ENCODE measurements at regions of chr12 and their contacts with region 1.

Region 1: GRCh38 chr12:108664338-108665258 is 30.9 kb upstream of the SELPLG start:
- DNase-seq: peak; percentile 82
- ATAC-seq: peak; percentile 96
- H3K4me3 Mint-ChIP-seq: no peak overlapping the region
- H3K27ac Mint-ChIP-seq: peak overlapping the region; percentile 55; the same call in 1 of the 2 replicates
- H3K4me1 Mint-ChIP-seq: peaks cover 32% of the 10 kb centered on the region
- H3K27me3 Mint-ChIP-seq: no peaks in the 10 kb centered on the region
- CTCF ChIP-seq: peak; percentile 76

Region 2: GRCh38 chr12:108257004-108257403 is 407.6 kb before region 1 on chr12:
- CTCF ChIA-PET with region 1: no interaction called
- POLR2A ChIA-PET with region 1: no interaction called
- DNase-seq: no peak
- ATAC-seq: no peak
- H3K4me3 Mint-ChIP-seq: no peak overlapping the region
- H3K27ac Mint-ChIP-seq: no peak overlapping the region
- H3K4me1 Mint-ChIP-seq: peaks cover 31% of the 10 kb centered on the region
- H3K27me3 Mint-ChIP-seq: peaks cover 7% of the 10 kb centered on the region; the same call in 1 of the 2 replicates
- CTCF ChIP-seq: no peak

Region 3: DNA sequence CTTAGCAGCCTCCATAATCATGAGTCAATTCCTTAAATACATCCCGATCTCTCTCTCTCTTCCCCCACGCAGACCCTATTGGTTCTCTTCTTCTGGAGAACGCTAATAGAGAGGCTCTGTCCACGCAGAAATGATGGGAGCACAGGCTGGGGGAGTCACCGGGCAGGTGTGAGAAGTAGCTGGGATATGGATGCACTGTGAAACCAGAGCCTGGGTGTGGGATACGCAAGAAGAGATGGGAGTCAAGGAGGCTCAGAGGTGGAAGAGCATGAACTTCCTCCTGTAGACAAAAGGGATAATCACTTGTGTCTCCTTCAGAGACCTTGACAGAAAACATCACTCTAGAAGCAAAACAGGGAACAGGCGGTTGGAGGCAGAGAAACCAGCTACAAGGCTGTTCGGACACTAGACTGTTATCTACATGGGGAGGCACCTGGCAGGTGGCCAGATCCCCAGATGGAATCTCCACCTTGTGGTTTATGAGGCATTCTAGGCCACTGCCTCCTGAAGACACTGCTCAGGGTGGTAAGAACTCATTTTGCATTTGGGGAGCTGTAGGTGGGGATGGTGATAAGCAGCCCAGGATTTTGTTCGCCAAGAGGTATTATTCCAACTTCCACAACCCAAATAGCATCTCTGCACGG is 23.7 kb before region 1 on chr12:
- CTCF ChIA-PET with region 1: interaction called, 10 read pairs
- POLR2A ChIA-PET with region 1: no interaction called
- DNase-seq: no peak
- ATAC-seq: no peak
- H3K4me3 Mint-ChIP-seq: no peak overlapping the region
- H3K27ac Mint-ChIP-seq: no peak overlapping the region
- H3K4me1 Mint-ChIP-seq: peaks cover 43% of the 10 kb centered on the region
- H3K27me3 Mint-ChIP-seq: no peaks in the 10 kb centered on the region
- CTCF ChIP-seq: no peak

Region 4: DNA sequence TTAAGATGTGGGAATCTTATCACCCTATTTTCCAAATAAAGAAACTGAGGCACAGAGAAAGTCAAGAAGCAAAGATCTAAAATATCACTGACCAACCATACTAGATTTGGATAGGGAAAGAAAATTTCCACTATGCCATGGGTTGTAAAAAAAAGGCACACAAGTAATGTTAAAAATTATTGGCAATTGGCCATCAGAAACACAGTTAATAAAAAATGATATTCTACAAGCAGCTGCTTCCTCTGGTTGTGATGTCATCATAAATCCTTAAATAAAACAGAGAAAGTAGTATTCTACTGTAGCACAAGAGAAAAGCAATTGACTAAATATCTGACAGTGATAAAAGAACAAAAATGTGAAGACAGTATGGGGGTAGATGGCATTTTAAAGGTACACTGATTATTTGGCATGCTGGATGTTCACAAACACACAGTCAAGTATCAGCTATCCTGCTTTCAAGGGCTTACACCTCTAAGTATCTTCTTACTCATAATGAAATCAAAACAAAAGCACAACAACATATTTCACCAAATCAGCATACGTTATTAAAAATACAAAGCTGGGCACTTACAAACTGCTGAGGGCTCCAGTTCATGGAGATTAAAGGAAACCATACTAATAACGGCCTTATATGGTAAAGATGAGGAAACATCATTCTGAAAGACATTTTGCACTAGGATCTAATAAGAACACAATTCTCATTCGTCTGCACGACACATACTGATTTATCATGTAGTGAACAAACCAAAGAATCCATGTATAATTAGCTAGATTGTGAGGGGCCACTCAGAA is 21.1 kb after region 1 on chr12:
- CTCF ChIA-PET with region 1: interaction called, 19 read pairs
- POLR2A ChIA-PET with region 1: no interaction called
- DNase-seq: no peak
- ATAC-seq: no peak
- H3K4me3 Mint-ChIP-seq: no peak overlapping the region
- H3K27ac Mint-ChIP-seq: peak overlapping the region; percentile 42; the same call in 1 of the 2 replicates
- H3K4me1 Mint-ChIP-seq: peaks cover 38% of the 10 kb centered on the region
- H3K27me3 Mint-ChIP-seq: no peaks in the 10 kb centered on the region
- CTCF ChIP-seq: no peak

Region 5: GRCh38 chr12:108731105-108731865 is 66.7 kb after region 1 on chr12 and contains the start of gene CORO1C:
- CTCF ChIA-PET with region 1: interaction called, 12 read pairs
- POLR2A ChIA-PET with region 1: interaction called, 4 read pairs
- DNase-seq: peak; percentile 98
- ATAC-seq: peak; percentile 72
- H3K4me3 Mint-ChIP-seq: peak within 1 kb of the TSS; percentile 91
- H3K27ac Mint-ChIP-seq: peak within 1 kb of the TSS; percentile 98
- H3K4me1 Mint-ChIP-seq: peaks cover 43% of the 10 kb centered on the region
- H3K27me3 Mint-ChIP-seq: no peaks in the 10 kb centered on the region
- CTCF ChIP-seq: peak; percentile 72
- total RNA-seq, gene CORO1C: 108 to 114 TPM (median 113 TPM) in 3 replicates

Region 6: DNA sequence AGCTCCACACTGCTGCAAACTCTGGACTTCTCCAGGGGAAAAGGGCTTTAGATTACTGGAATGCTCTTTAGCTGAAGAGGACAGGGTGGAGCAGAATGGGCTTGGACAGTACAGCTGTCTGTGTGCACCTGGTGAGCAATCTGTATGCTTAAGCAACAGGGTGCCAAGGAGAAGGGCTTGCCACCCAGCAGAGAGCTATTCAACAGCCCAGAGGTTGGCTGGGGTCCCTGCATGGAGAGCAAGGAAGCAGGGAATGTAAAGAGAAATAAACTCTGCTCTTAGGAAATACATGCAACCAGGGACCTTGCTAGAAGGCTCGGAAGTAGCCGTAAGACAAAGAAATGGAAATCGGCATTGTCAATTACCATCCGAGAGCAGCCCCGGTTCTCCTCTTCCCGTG is 119.7 kb after region 1 on chr12:
- CTCF ChIA-PET with region 1: interaction called, 13 read pairs
- POLR2A ChIA-PET with region 1: no interaction called
- DNase-seq: no peak
- ATAC-seq: peak; percentile 50
- H3K4me3 Mint-ChIP-seq: no peak overlapping the region
- H3K27ac Mint-ChIP-seq: peak overlapping the region; percentile 78
- H3K4me1 Mint-ChIP-seq: peaks cover 26% of the 10 kb centered on the region
- H3K27me3 Mint-ChIP-seq: no peaks in the 10 kb centered on the region
- CTCF ChIP-seq: no peak

Measured in WTC11 (cell line).